ENCODE measurements at regions of chr6 and their contacts with region 1.

Region 1: GRCh38 chr6:36594029-36594815 is at the start of gene SRSF3:
- DNase-seq: peak; percentile 97
- ATAC-seq: peak; percentile 98
- total RNA-seq, gene SRSF3: 122 TPM

Region 2: GRCh38 chr6:36442671-36443470 is 151.4 kb before region 1 on chr6 and contains the starts of genes KCTD20 and PXT1:
- intact Hi-C with region 1: loop called (anchors 10 kb)
- DNase-seq: peak; percentile 93
- ATAC-seq: peak; percentile 94
- total RNA-seq, gene KCTD20: 22.1 TPM
- total RNA-seq, gene PXT1: 0.13 TPM

Region 3: DNA sequence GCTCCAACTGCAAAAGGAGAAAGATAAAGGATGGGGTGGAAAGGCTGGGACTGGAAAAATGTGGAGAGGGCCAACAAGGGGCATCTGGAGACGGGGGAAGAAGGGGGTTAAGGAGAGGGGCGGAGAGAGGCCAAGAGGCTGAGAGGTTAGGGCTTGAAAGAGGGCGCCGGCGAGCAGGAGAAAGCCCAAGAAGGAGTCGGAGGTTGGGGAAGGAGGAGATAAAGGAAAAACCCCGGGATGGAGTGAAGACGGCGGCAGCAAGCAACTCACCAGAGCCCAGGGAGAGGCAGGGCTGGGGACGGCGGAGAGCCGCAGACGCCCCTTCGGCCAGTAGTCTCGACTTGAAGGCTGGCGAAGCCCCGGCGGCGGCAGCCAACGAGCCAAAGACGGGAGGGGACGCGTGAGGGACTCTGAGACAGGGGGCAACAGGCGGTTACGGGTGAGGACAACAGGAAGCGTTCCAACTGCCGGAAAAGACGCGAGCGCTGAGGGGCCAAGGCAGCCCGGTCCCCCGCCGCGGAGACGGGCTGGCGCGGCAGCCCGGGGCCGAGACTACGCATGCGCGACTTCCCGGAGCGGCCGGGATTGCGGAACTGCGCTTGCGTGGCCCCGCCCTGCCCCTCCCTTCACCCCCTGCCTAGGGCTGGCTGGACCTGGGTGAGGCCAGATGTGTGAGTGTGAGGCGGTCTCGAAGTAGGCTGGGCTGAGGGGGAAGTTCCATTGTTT is 47.1 kb before region 1 on chr6 and contains the start of gene STK38:
- intact Hi-C with region 1: loop called (anchors 5 kb)
- DNase-seq: peak; percentile 95
- ATAC-seq: peak; percentile 98
- total RNA-seq, gene STK38: 21.2 TPM